Natural killer cell (primary cell): ENCODE measurements at regions of chr6 and their contacts with region 1.

Region 1: DNA sequence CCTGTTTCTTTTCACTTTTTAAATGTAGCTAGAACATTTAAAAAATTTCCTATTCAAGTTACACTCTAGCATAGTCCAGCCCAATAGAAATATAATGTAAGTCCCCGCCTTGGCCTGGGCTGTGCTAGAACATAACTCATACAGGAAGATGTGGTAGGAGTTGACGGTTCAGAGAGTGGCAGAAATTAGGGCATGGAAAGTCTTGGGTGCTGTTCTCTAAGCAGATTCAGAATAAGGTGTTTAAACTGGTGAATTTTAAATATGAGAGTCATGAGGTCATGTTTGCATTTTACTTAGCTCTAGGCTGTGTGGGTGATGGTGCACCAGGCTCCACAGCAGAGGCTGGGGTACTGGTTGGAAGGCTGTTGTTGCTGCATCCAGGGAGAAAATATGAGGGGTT is 256.5 kb downstream of the FARS2 start:
- DNase-seq: peak; percentile 36 to 60
- ATAC-seq: peak; percentile 73 to 79 (median 76)
- H3K4me3 ChIP-seq: no peak overlapping the region
- H3K4me3 Mint-ChIP-seq: peak overlapping the region; percentile 80
- H3K27ac ChIP-seq: peak overlapping the region; percentile 42
- H3K27ac Mint-ChIP-seq: peak overlapping the region; percentile 82 to 89
- H3K4me1 ChIP-seq: peaks cover 44% of the 10 kb centered on the region
- H3K4me1 Mint-ChIP-seq: peaks cover 61 to 63% of the 10 kb centered on the region in 2 donors
- H3K27me3 ChIP-seq: no peaks in the 10 kb centered on the region
- H3K27me3 Mint-ChIP-seq: peaks cover 0 to under 1% of the 10 kb centered on the region in 2 donors
- CTCF ChIP-seq: no peak

Region 2: GRCh38 chr6:5190507-5190906 is 327.3 kb before region 1 on chr6:
- intact Hi-C with region 1: no loop called
- DNase-seq: no peak
- ATAC-seq: no peak
- H3K4me3 ChIP-seq: no peak overlapping the region
- H3K4me3 Mint-ChIP-seq: no peak overlapping the region
- H3K27ac ChIP-seq: no peak overlapping the region
- H3K27ac Mint-ChIP-seq: no peak overlapping the region
- H3K4me1 ChIP-seq: no peaks in the 10 kb centered on the region
- H3K4me1 Mint-ChIP-seq: no peaks in the 10 kb centered on the region
- H3K27me3 ChIP-seq: no peaks in the 10 kb centered on the region
- H3K27me3 Mint-ChIP-seq: no peaks in the 10 kb centered on the region
- CTCF ChIP-seq: no peak

Region 3: DNA sequence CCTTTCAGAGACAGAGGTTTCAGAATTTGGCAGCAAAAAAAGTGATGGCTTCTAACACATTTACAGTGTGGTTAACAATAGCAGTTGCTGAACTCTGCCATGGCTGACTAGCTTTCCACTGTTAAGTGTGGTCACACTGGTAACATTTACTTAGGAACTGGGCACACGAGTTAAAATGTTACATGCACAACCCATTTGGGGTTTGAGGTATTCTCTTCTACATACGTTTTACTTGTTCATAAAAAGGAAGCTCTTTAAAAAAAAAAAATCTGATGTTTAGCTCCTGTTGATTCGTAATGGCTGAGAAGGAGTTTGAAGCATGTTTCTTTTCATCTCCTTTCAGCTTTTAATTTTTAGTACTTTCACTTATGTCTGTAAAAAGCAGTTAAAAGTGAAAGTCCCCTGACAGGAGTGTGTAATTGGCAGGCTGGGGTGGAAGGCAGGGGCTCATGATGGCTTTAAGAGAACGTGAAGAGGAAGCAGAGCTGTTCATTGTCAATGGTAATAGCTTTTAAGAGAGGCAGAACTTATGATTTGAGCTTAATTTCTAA is 10.6 kb before region 1 on chr6:
- intact Hi-C with region 1: loop called (anchors 1 kb)
- DNase-seq: peak in 1 of 2 donors; percentile 51
- ATAC-seq: peak; percentile 83 to 93 (median 85)
- H3K4me3 ChIP-seq: peak overlapping the region; percentile 16
- H3K4me3 Mint-ChIP-seq: peak overlapping the region; percentile 87
- H3K27ac ChIP-seq: peak overlapping the region; percentile 76
- H3K27ac Mint-ChIP-seq: peak overlapping the region; percentile 89 to 90
- H3K4me1 ChIP-seq: peaks cover 23% of the 10 kb centered on the region
- H3K4me1 Mint-ChIP-seq: peaks cover 38 to 51% of the 10 kb centered on the region in 2 donors
- H3K27me3 ChIP-seq: no peaks in the 10 kb centered on the region
- H3K27me3 Mint-ChIP-seq: no peaks in the 10 kb centered on the region
- CTCF ChIP-seq: no peak

Region 4: DNA sequence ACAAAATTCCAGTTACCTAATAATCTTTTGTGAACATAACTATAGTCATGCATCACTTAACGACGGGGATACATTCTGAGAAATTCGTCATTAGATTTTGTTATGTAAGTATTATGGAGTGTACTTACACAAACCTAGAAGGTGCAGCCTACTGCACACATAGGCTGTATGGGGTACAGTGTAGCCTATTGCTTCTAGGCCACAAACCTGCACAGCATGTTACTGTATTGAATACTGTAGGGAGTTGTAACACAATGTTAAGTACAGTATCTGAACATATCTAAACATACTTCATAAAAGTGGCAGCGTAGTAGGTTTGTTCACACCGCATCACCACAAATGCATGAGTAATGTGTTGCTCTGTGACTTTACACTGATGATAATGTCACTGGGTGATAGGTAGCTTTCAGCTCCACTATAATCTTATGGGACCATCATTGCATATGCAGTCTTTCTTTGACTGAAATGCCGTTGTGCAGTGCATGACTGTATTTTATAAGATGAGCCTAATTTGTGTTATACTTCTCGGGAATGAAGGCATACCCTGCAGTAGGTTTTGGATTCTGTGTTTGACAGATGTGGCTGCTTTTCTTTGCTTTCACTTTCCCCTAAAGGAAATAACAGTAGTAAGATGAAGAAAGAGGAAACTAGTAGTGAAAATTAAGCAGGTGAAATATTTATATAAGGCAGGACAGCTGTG is 109.1 kb after region 1 on chr6:
- intact Hi-C with region 1: loop called (anchors 2 kb)
- DNase-seq: peak in 1 of 2 donors; percentile 37
- ATAC-seq: peak; percentile 76 to 91 (median 86)
- H3K4me3 ChIP-seq: no peak overlapping the region
- H3K4me3 Mint-ChIP-seq: peak overlapping the region; percentile 74
- H3K27ac ChIP-seq: peak overlapping the region; percentile 16
- H3K27ac Mint-ChIP-seq: peak overlapping the region; percentile 80 to 81
- H3K4me1 ChIP-seq: peaks cover 6% of the 10 kb centered on the region
- H3K4me1 Mint-ChIP-seq: peaks cover 29 to 30% of the 10 kb centered on the region in 2 donors
- H3K27me3 ChIP-seq: no peaks in the 10 kb centered on the region
- H3K27me3 Mint-ChIP-seq: no peaks in the 10 kb centered on the region
- CTCF ChIP-seq: no peak

Region 5: GRCh38 chr6:5866547-5867101 is 348.8 kb after region 1 on chr6:
- intact Hi-C with region 1: loop called (anchors 5 kb)
- DNase-seq: peak in 1 of 2 donors; percentile 52
- ATAC-seq: peak; percentile 52 to 62 (median 60)
- H3K4me3 ChIP-seq: peak overlapping the region; percentile 6
- H3K4me3 Mint-ChIP-seq: peak overlapping the region; percentile 86
- H3K27ac ChIP-seq: peak overlapping the region; percentile 78
- H3K27ac Mint-ChIP-seq: peak overlapping the region; percentile 92 to 95
- H3K4me1 ChIP-seq: peaks cover 22% of the 10 kb centered on the region
- H3K4me1 Mint-ChIP-seq: peaks cover 48 to 50% of the 10 kb centered on the region in 2 donors
- H3K27me3 ChIP-seq: no peaks in the 10 kb centered on the region
- H3K27me3 Mint-ChIP-seq: no peaks in the 10 kb centered on the region
- CTCF ChIP-seq: no peak